Mammary epithelial cell (primary cell): ENCODE measurements at regions of chr14 and their contacts with region 1.

Region 1: GRCh38 chr14:75906676-75907280 is 75.0 kb downstream of the TGFB3 start:
- DNase-seq: peak; percentile 33
- H3K4me3 ChIP-seq: no peak overlapping the region
- H3K27ac ChIP-seq: no peak overlapping the region
- H3K4me1 ChIP-seq: peaks cover 10% of the 10 kb centered on the region
- H3K27me3 ChIP-seq: no peaks in the 10 kb centered on the region
- CTCF ChIP-seq: peak; percentile 82 to 93

Region 2: DNA sequence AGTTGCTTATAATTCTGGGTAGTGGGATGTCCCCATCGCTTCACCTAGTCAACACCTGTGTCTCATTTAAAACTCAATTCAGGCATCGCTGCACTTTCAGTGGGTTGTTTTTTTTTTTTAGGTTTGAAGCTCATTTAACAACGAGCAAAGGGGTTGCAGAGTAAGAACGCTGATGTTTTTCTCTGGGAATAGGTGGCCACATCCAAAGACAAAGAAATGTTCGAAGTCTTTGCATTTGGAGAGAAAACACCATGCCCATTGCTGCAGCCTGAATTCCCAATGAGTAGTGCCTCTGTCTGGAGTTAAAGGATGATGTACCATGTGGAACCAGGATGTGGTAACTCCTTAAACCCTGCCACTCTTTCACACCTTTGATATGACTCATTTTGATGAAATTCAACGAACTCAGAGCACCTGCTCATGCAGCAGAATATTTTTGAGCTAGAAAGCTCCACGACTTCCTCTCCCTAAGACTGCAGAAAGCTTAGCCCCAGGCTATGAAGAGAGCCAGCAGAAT is 419.6 kb before region 1 on chr14:
- CTCF ChIA-PET with region 1: no interaction called
- dilution Hi-C with region 1: no loop called
- in situ Hi-C with region 1: no loop called
- intact Hi-C with region 1: no loop called
- DNase-seq: peak; percentile 76
- H3K4me3 ChIP-seq: no peak overlapping the region
- H3K27ac ChIP-seq: no peak overlapping the region
- H3K4me1 ChIP-seq: peaks cover 8% of the 10 kb centered on the region
- H3K27me3 ChIP-seq: no peaks in the 10 kb centered on the region
- CTCF ChIP-seq: no peak

Region 3: GRCh38 chr14:75702616-75703261 is 204.0 kb before region 1 on chr14:
- CTCF ChIA-PET with region 1: no interaction called
- dilution Hi-C with region 1: no loop called
- in situ Hi-C with region 1: no loop called
- intact Hi-C with region 1: no loop called
- DNase-seq: no peak
- H3K4me3 ChIP-seq: no peak overlapping the region
- H3K27ac ChIP-seq: no peak overlapping the region
- H3K4me1 ChIP-seq: no peaks in the 10 kb centered on the region
- H3K27me3 ChIP-seq: no peaks in the 10 kb centered on the region
- CTCF ChIP-seq: no peak

Region 4: GRCh38 chr14:75794615-75795038 is 112.2 kb before region 1 on chr14:
- CTCF ChIA-PET with region 1: no interaction called
- dilution Hi-C with region 1: no loop called
- in situ Hi-C with region 1: no loop called
- intact Hi-C with region 1: loop called (anchors 2 kb)
- DNase-seq: peak; percentile 42
- H3K4me3 ChIP-seq: no peak overlapping the region
- H3K27ac ChIP-seq: no peak overlapping the region
- H3K4me1 ChIP-seq: no peaks in the 10 kb centered on the region
- H3K27me3 ChIP-seq: no peaks in the 10 kb centered on the region
- CTCF ChIP-seq: peak; percentile 21 to 43

Region 5: DNA sequence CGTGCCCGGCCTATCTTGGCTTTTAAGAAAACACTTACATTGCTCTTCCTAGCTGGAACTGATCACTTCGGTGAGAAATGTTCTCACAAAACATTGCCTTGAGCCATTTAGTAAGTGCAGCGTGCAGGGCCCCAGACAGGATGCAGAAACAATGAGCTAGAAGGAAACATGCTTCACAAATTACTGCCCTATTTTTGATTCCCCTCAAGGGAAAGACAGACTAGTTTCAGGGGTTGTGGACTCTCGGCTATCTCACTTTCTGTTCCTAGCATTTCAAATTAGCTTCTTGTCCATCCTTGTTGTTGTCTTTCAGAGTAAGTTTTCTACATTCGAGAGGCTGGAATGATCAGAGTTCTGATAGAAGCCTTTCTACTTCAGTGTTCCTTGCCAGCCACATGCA is 53.5 kb after region 1 on chr14:
- CTCF ChIA-PET with region 1: no interaction called
- dilution Hi-C with region 1: no loop called
- in situ Hi-C with region 1: no loop called
- intact Hi-C with region 1: no loop called
- DNase-seq: no peak
- H3K4me3 ChIP-seq: no peak overlapping the region
- H3K27ac ChIP-seq: no peak overlapping the region
- H3K4me1 ChIP-seq: no peaks in the 10 kb centered on the region
- H3K27me3 ChIP-seq: no peaks in the 10 kb centered on the region
- CTCF ChIP-seq: no peak

Region 6: DNA sequence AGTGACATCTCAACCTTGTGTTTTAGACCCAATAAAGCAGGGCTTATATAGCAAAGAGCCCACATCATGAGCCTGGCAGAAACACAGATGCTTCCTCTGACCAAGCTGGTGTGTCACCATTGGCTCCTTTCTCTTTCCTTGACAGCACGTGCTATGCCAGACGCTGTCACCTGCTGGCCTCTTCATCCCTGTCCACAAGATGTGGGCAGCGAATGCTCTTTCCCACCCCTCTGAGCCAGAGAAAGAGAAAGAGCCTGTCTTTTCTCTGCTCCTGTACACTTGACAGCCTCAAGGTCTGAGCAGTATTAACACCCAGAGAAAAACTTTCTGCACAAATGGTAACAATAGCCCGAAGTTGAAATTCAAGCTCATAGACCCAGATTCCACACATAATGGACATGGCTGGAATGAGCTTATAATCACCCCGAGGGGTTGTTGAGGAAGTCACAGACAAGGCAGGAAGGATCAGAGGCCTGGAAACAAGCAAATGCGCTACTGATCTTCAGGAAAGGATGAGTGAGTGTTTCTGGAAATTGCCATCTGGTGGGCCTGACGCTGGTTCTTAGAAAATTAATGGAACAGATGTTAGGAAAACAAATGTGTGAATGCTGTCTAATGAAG is 66.1 kb after region 1 on chr14:
- CTCF ChIA-PET with region 1: interaction called, 3 read pairs
- dilution Hi-C with region 1: loop called (anchors 10 kb)
- in situ Hi-C with region 1: no loop called
- intact Hi-C with region 1: loop called (anchors 1 kb)
- DNase-seq: no peak
- H3K4me3 ChIP-seq: no peak overlapping the region
- H3K27ac ChIP-seq: no peak overlapping the region
- H3K4me1 ChIP-seq: no peaks in the 10 kb centered on the region
- H3K27me3 ChIP-seq: no peaks in the 10 kb centered on the region
- CTCF ChIP-seq: no peak